Gastrocnemius medialis (tissue), 4 donors: ENCODE measurements at regions of chr4 and their contacts with region 1.

Region 1: DNA sequence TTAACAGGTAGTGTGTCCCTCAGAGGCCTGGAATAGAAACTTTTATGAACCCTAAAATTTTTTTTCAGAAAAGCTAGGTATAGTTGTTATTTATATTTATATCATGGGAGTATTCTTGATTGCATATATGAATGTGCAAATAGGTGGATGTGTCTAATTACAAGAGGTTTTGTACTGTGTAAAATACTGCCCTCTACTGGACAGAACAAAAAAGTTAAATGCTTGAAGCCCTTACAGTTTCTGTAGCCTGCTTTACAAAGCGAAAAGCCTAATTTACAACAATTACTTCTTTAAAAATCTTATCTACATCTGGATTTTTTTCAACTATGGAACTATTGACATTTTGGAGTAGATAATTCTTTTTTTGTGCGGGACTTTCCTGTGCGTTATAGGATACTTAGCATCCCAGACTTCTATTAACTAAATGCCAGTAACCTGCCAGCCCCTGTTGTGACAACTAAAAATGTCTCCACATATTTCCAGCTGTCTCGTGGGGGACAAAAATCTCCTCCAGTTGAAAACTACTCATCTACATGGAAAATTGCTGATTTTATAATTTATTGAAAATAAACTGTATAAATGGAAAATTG is 35.1 kb downstream of the ENPEP start:
- DNase-seq: no peak
- ATAC-seq: peak; percentile 65 to 90
- H3K4me3 ChIP-seq: no peak overlapping the region
- H3K27ac ChIP-seq: no peak overlapping the region
- H3K4me1 ChIP-seq: no peaks in the 10 kb centered on the region
- H3K27me3 ChIP-seq: no peaks in the 10 kb centered on the region
- CTCF ChIP-seq: peak; percentile 62 to 81 (median 75)
- POLR2A ChIP-seq: no peak

Region 2: GRCh38 chr4:110005461-110006056 is 505.5 kb before region 1 on chr4:
- in situ Hi-C with region 1: loop called in 3 of 4 experiments (anchors 5 to 10 kb)
- intact Hi-C with region 1: no loop called
- DNase-seq: no peak
- ATAC-seq: no peak
- H3K4me3 ChIP-seq: no peak overlapping the region
- H3K27ac ChIP-seq: no peak overlapping the region
- H3K4me1 ChIP-seq: no peaks in the 10 kb centered on the region
- H3K27me3 ChIP-seq: no peaks in the 10 kb centered on the region
- CTCF ChIP-seq: peak in 4 of 5 experiments; percentile 20 to 49 (median 32)
- POLR2A ChIP-seq: no peak

Region 3: DNA sequence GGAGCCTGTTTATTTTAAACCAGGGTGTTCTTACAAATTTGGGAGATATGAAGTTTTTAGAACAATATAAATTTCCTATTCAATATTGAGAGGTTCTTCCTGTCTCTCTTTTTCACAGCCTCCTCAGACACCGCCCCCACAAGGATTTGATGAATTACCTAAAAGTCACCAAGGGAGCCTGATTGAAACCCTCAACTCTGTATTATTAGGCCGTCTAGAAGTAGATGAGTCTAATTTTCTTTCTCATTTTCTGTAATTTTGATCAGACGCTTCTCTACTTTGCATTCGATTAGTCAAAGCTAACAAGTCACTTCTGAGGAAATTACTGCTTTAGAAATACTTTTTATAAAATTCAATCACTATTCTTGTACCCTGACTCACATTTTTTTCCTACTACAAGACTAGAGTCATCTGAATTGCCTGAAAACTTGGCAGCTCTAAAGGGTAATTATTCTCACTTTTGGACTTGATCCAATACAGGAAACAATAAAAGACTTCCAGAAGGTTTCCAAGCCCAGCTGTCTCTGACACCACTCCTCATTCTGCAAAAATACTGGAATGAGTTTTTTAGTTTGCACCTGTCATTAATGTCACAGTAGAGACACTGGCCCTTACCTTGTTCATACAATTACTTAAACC is 423.9 kb before region 1 on chr4:
- in situ Hi-C with region 1: no loop called
- intact Hi-C with region 1: no loop called
- DNase-seq: no peak
- ATAC-seq: peak in 1 of 2 donors; percentile 44
- H3K4me3 ChIP-seq: no peak overlapping the region
- H3K27ac ChIP-seq: no peak overlapping the region
- H3K4me1 ChIP-seq: peaks cover 0 to 7% of the 10 kb centered on the region in 2 donors
- H3K27me3 ChIP-seq: no peaks in the 10 kb centered on the region
- CTCF ChIP-seq: no peak
- POLR2A ChIP-seq: no peak

Region 4: DNA sequence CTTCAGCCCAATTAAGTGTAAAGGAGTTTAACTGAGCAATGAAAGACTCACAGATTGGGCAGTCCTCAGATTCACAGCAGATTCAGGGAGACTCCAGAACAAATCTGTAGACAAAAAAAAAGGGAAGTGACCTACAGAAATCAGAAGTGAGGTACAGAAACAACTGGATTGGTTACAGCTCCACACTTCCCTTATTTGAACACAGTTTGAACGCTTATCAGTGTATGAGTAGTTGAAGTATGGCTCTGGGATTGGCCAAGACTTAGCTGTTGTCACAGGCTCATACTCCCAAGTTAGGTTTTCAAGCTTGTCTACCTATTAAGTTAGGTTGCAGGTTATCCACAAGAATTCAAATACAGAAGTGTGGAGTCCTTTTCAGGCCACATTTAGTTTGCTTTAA is 200.3 kb before region 1 on chr4:
- in situ Hi-C with region 1: loop called in 1 of 4 experiments (anchors 10 kb)
- intact Hi-C with region 1: no loop called
- DNase-seq: no peak
- ATAC-seq: no peak
- H3K4me3 ChIP-seq: no peak overlapping the region
- H3K27ac ChIP-seq: no peak overlapping the region
- H3K4me1 ChIP-seq: peaks cover 7% of the 10 kb centered on the region in 2 donors
- H3K27me3 ChIP-seq: no peaks in the 10 kb centered on the region
- CTCF ChIP-seq: no peak
- POLR2A ChIP-seq: no peak

Region 5: DNA sequence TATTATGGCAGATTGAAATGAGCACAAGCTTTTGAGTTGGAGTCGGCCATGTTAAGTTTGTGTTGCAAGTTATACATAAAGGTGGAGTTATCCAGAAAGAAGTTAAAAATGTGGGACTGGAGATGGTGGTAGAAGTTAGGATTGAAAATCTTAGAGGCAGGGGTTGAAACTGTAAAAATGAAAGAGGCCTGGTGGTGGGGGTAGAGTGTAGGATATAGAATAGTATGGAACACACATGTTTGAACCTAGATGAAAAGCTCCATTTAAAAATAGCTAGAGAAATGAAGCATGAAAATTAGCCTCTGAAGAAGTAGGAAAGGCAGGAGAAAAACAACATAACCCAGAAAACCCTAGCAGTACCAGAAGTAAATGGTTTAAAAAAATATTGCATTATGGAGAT is 166.9 kb before region 1 on chr4:
- in situ Hi-C with region 1: loop called in 3 of 4 experiments (anchors 5 to 25 kb)
- intact Hi-C with region 1: loop called (anchors 1 kb)
- DNase-seq: no peak
- ATAC-seq: peak; percentile 33 to 46
- H3K4me3 ChIP-seq: no peak overlapping the region
- H3K27ac ChIP-seq: no peak overlapping the region
- H3K4me1 ChIP-seq: no peaks in the 10 kb centered on the region
- H3K27me3 ChIP-seq: no peaks in the 10 kb centered on the region
- CTCF ChIP-seq: peak in 3 of 5 experiments; percentile 33 to 40 (median 40)
- POLR2A ChIP-seq: no peak

Region 6: DNA sequence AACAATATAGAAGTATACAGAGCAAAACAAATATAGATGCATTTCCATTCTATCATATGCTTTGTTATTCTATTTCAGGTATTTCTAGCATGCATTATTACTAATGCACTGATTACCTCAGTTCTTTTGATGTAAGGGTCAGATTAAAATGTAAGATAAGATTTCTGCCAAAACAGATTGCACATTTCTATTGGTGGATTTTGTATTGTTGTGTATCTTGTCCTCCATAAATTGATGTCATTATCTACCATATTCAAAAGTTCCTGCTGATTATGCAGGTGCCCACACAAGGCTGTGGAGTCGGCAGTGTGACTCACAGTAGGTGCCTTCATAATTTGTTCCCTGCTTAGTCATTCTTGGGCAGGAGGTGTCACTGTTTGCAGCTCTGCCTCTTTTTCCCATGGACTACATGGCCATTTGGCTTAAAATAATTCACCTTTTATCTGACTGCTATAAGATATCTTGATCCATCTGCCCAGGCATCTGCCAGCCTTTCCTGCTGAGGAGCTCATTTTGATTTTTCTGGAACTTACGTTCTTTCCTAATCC is 68.8 kb before region 1 on chr4:
- in situ Hi-C with region 1: no loop called
- intact Hi-C with region 1: loop called (anchors 1 kb)
- DNase-seq: peak in 1 of 2 donors; percentile 12
- ATAC-seq: peak; percentile 66 to 87
- H3K4me3 ChIP-seq: no peak overlapping the region
- H3K27ac ChIP-seq: no peak overlapping the region
- H3K4me1 ChIP-seq: peaks cover 0 to 5% of the 10 kb centered on the region in 2 donors
- H3K27me3 ChIP-seq: no peaks in the 10 kb centered on the region
- CTCF ChIP-seq: peak; percentile 18 to 45 (median 35)
- POLR2A ChIP-seq: no peak